ENCODE measurements at regions of chr10 and their contacts with region 1.

Region 1: GRCh38 chr10:114767101-114767985 is 54.2 kb upstream of the FHIP2A start:
- DNase-seq: peak; percentile 51
- H3K4me3 Mint-ChIP-seq: peak overlapping the region; percentile 59
- H3K27ac Mint-ChIP-seq: no peak overlapping the region
- H3K4me1 Mint-ChIP-seq: peaks cover 7% of the 10 kb centered on the region
- H3K27me3 Mint-ChIP-seq: no peaks in the 10 kb centered on the region
- CTCF ChIP-seq: no peak

Region 2: GRCh38 chr10:114458955-114459354 is 308.4 kb before region 1 on chr10:
- CTCF ChIA-PET with region 1: interaction called, 10 read pairs
- intact Hi-C with region 1: no loop called
- DNase-seq: peak; percentile 41
- H3K4me3 Mint-ChIP-seq: no peak overlapping the region
- H3K27ac Mint-ChIP-seq: no peak overlapping the region
- H3K4me1 Mint-ChIP-seq: no peaks in the 10 kb centered on the region
- H3K27me3 Mint-ChIP-seq: no peaks in the 10 kb centered on the region
- CTCF ChIP-seq: peak; percentile 26

Region 3: DNA sequence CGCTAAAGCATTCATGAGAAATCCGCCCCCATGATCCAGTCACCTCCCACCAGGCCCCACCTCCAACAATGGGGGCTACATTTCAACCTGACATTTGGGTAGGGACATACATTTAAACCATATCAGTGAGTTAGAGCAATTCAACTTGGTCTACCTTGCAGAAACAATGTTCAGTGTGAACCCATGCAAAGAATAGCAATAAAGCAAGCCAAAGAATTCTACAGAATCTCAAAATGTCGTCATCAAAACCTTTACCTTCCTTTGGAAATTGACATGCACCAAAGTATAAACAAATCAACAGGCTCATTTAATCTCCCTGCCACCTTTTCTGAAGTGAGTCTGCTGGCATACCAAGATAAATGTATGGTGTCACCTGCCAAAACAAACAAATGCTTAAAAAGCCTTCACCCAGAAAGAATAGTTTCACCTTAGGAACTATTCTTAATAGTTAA is 40.5 kb before region 1 on chr10:
- CTCF ChIA-PET with region 1: no interaction called
- intact Hi-C with region 1: loop called (anchors 5 kb)
- DNase-seq: no peak
- H3K4me3 Mint-ChIP-seq: no peak overlapping the region
- H3K27ac Mint-ChIP-seq: no peak overlapping the region
- H3K4me1 Mint-ChIP-seq: peaks cover 14% of the 10 kb centered on the region
- H3K27me3 Mint-ChIP-seq: no peaks in the 10 kb centered on the region
- CTCF ChIP-seq: no peak

Region 4: DNA sequence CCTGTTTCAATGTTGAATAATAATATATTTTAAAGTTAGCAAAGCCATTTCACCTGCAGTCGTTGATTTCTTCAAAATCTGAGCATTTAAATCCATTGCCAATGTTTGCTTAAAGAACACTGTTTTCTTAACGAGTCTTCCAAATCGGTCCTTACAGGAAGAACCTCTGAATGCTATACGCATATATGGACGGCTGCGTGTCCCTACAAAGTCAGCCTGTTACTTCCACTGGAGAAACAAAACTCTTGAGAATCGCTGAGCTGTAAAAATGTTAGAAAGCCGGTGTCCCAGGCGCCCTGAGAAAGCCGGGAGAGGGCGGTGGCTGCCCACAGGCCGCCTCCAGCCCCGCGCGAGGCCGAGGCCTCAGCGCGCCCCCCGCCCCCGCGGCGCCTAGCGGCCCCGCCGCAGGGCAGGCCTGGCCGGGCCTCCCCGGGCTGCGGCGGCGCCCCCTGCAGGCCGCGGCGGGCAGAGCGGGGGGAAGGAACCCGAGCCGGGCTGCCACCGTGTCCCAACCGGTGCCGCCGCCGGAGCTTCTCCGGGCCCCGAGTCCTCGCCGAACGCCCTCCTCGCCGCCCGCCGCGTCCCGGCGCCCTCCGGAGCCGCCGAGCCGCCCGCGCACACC is 54.1 kb after region 1 on chr10 and contains the start of gene FHIP2A:
- CTCF ChIA-PET with region 1: no interaction called
- intact Hi-C with region 1: no loop called
- DNase-seq: peak; percentile 88
- H3K4me3 Mint-ChIP-seq: peak within 1 kb of the TSS; percentile 81
- H3K27ac Mint-ChIP-seq: peak within 1 kb of the TSS; percentile 92
- H3K4me1 Mint-ChIP-seq: peaks cover 22% of the 10 kb centered on the region
- H3K27me3 Mint-ChIP-seq: no peaks in the 10 kb centered on the region
- CTCF ChIP-seq: peak; percentile 22
- total RNA-seq, gene FHIP2A: 10.8 and 10.9 TPM in 2 replicates